ENCODE measurements at regions of chr1 and their contacts with region 1.

Region 1: DNA sequence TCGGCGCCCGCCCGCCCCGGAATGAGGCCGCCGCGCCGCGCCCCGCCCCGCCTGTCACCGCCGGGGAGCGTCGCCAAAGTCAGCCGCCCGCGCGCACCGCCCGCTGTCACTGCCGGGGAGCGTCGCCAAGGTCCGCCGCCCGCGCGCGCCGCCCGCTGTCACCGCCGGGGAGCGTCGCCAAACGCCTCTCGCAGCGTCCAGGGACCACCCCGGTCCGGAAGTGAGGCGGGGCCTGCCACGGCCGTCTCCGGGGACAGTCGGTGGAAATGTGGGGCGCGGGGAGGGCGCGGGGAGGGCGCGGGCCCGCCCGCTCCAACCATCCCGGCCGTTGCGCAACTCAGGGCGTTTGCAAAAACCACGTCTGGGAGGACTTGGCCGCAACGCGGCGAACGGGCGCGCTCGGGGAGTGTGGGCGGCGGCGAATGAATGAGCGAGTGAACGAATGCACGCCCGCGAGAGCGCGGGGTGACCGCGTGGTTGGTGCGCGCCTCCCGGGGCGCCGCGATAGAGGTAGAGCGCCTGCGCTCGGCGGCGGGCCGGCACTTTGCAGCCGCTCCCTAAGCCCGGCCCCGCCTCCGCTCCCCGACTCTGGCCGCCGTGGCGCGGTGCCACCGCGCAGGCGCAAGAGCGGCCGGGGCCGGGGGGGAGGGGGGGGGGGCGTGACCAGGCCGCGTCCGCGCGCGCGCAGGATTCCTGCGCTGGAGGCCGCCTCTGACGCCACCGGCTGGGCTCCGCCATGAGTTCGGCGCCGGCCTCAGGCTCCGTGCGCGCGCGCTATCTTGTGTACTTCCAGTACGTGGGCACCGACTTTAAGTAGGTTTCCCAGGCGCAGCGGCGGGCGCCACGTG is at the starts of genes ACAP3 and PUSL1:
- DNase-seq: peak; percentile 88 to 94 (median 91)
- ATAC-seq: peak; percentile 87
- H3K4me3 ChIP-seq: peak within 1 kb of the TSS; percentile 83
- H3K4me3 Mint-ChIP-seq: peak within 1 kb of the TSS; percentile 82 to 94 (median 88)
- H3K27ac ChIP-seq: peak within 1 kb of the TSS; percentile 90
- H3K27ac Mint-ChIP-seq: peak within 1 kb of the TSS; percentile 47 to 94 (median 89)
- H3K4me1 ChIP-seq: peaks cover 31 to 34% of the 10 kb centered on the region in 2 donors
- H3K4me1 Mint-ChIP-seq: peaks cover 11 to 24% (median 17%) of the 10 kb centered on the region in 7 donors
- H3K27me3 ChIP-seq: no peaks in the 10 kb centered on the region
- H3K27me3 Mint-ChIP-seq: no peaks in the 10 kb centered on the region
- total RNA-seq, gene ACAP3: 51.5 to 70.8 (median 58.2) TPM
- total RNA-seq, gene PUSL1: 17.7 to 25.4 (median 19.4) TPM

Region 2: GRCh38 chr1:958823-959729 is 349.1 kb before region 1 on chr1 and contains the start of gene NOC2L:
- CTCF ChIA-PET with region 1: no interaction called
- POLR2A ChIA-PET with region 1: no interaction called
- intact Hi-C with region 1: loop called in 1 of 2 experiments (anchors 1 kb)
- DNase-seq: peak; percentile 84 to 97 (median 92)
- ATAC-seq: peak; percentile 96
- H3K4me3 ChIP-seq: peak within 1 kb of the TSS; percentile 87
- H3K4me3 Mint-ChIP-seq: peak within 1 kb of the TSS; percentile 83 to 95 (median 90)
- H3K27ac ChIP-seq: peak within 1 kb of the TSS; percentile 89
- H3K27ac Mint-ChIP-seq: peak within 1 kb of the TSS; percentile 48 to 85 (median 77)
- H3K4me1 ChIP-seq: peaks cover 8 to 12% of the 10 kb centered on the region in 2 donors
- H3K4me1 Mint-ChIP-seq: peaks cover 12 to 28% (median 21%) of the 10 kb centered on the region in 7 donors
- H3K27me3 ChIP-seq: no peaks in the 10 kb centered on the region
- H3K27me3 Mint-ChIP-seq: peaks cover 0 to 2% (median 0%) of the 10 kb centered on the region in 5 donors
- total RNA-seq, gene NOC2L: 46.6 to 88.3 (median 67.9) TPM

Region 3: DNA sequence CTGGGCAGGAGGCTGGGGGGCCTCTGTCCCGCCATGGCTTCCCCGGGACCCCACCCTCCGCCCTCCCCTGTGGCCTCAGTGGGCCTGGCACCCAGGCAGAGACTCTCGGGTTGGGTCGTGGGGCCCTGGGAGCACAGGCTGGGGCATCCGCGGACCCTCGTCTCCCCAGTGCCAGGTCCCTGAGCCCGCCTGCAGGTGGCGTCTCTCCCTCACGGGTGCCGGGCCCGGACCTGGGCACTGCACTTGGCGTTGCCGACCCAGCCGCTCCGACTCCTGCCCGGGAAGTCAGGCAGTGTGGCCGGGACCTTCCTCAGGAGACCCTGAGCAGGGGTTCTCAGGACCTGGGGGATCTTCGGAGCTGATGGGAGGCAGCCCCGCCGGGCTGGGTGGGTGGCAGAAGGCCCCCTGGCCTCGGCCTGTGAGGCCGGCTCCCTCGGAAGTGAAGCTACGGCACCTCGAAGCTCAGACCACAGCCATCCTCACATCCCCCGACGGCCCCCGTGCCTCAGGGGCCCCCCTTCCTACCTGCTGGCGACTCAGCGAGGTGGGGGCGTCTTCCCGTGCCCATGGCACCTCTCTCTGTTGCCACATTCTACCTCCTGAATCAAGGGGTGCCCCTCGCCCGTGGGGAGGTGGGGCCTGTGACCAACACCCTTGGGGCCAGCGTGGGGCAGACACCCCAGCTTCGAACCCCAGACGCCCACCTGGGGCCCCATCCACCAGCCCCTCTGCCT is 185.9 kb before region 1 on chr1:
- CTCF ChIA-PET with region 1: interaction called, 4 read pairs
- POLR2A ChIA-PET with region 1: no interaction called
- intact Hi-C with region 1: loop called (anchors 1 kb)
- DNase-seq: peak; percentile 60 to 90 (median 80)
- ATAC-seq: peak; percentile 96
- H3K4me3 ChIP-seq: peak overlapping the region; percentile 45
- H3K4me3 Mint-ChIP-seq: peak overlapping the region in 4 of 10 donors; percentile 20 to 49 (median 32)
- H3K27ac ChIP-seq: peak overlapping the region; percentile 47
- H3K27ac Mint-ChIP-seq: peak overlapping the region in 1 of 9 donors; percentile 52
- H3K4me1 ChIP-seq: peaks cover 5 to 10% of the 10 kb centered on the region in 2 donors
- H3K4me1 Mint-ChIP-seq: peaks cover 0 to 15% (median 3%) of the 10 kb centered on the region in 7 donors
- H3K27me3 ChIP-seq: no peaks in the 10 kb centered on the region
- H3K27me3 Mint-ChIP-seq: peaks cover 0 to 15% (median 0%) of the 10 kb centered on the region in 5 donors

Region 4: DNA sequence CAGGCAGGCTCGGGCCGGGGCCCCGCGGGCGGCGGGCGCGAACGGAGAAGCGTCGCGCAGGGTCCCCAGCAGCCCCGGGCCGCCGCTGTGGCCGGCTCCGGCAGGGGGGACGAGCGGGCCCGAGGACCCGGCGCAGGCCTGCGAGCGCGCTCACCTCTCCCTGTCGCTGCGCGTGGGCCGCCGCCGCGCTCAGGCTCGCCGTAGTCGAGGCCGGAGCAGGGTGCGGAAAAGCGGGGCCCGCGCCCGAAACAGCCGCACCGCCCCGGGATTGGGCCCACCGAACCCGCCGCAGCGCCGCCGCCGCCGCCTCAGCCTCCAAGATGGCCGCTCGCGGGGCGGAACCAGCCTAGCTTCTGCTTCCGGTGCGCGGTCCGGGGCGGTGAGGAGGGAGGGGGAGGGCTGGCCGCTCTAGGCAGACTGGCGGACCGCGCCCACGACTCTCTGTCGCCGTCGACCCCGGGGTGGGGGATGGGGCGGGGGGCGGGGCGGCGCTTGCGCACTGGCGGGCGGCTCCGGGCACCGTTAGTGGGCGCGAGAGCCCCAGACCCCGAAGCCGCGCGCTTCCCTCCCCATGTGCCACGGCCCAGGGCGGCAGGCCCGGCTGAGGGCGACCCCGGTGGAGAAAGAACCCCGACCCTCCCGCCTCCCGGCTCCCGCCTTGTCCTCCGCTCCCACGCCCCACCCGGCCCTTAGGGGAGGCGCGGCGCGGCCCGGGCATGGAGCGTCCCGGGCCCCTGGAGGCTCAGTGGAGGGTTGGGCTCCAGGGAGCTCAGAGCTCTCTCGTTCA is 34.4 kb before region 1 on chr1 and contains the start of gene UBE2J2:
- CTCF ChIA-PET with region 1: no interaction called
- POLR2A ChIA-PET with region 1: no interaction called
- intact Hi-C with region 1: loop called (anchors 1 kb)
- DNase-seq: peak; percentile 83 to 92 (median 90)
- ATAC-seq: peak; percentile 99
- H3K4me3 ChIP-seq: peak within 1 kb of the TSS; percentile 77
- H3K4me3 Mint-ChIP-seq: peak within 1 kb of the TSS; percentile 79 to 92 (median 88)
- H3K27ac ChIP-seq: peak within 1 kb of the TSS; percentile 90
- H3K27ac Mint-ChIP-seq: peak within 1 kb of the TSS; percentile 36 to 94 (median 83)
- H3K4me1 ChIP-seq: peaks cover 28 to 39% of the 10 kb centered on the region in 2 donors
- H3K4me1 Mint-ChIP-seq: peaks cover 21 to 45% (median 35%) of the 10 kb centered on the region in 7 donors
- H3K27me3 ChIP-seq: no peaks in the 10 kb centered on the region
- H3K27me3 Mint-ChIP-seq: no peaks in the 10 kb centered on the region
- total RNA-seq, gene UBE2J2: 62.3 to 89.3 (median 75.1) TPM

Region 5: GRCh38 chr1:1283821-1284220 is 24.3 kb before region 1 on chr1:
- CTCF ChIA-PET with region 1: no interaction called
- POLR2A ChIA-PET with region 1: no interaction called
- intact Hi-C with region 1: no loop called
- DNase-seq: no peak
- ATAC-seq: no peak
- H3K4me3 ChIP-seq: no peak overlapping the region
- H3K4me3 Mint-ChIP-seq: no peak overlapping the region
- H3K27ac ChIP-seq: no peak overlapping the region
- H3K27ac Mint-ChIP-seq: no peak overlapping the region
- H3K4me1 ChIP-seq: no peaks in the 10 kb centered on the region
- H3K4me1 Mint-ChIP-seq: peaks cover 0 to 1% (median 0%) of the 10 kb centered on the region in 7 donors
- H3K27me3 ChIP-seq: no peaks in the 10 kb centered on the region
- H3K27me3 Mint-ChIP-seq: no peaks in the 10 kb centered on the region

Region 6: GRCh38 chr1:1374929-1375662 is 67.0 kb after region 1 on chr1 and contains the start of gene AURKAIP1:
- CTCF ChIA-PET with region 1: interaction called, 4 read pairs
- POLR2A ChIA-PET with region 1: interaction called, 6 read pairs
- intact Hi-C with region 1: loop called (anchors 1 kb)
- DNase-seq: peak; percentile 80 to 98 (median 96)
- ATAC-seq: peak; percentile 84
- H3K4me3 ChIP-seq: peak within 1 kb of the TSS; percentile 74
- H3K4me3 Mint-ChIP-seq: peak within 1 kb of the TSS; percentile 82 to 96 (median 94)
- H3K27ac ChIP-seq: peak within 1 kb of the TSS; percentile 88
- H3K27ac Mint-ChIP-seq: peak within 1 kb of the TSS; percentile 91 to 98 (median 97)
- H3K4me1 ChIP-seq: peaks cover 18 to 35% of the 10 kb centered on the region in 2 donors
- H3K4me1 Mint-ChIP-seq: peaks cover 0 to 37% (median 21%) of the 10 kb centered on the region in 7 donors
- H3K27me3 ChIP-seq: no peaks in the 10 kb centered on the region
- H3K27me3 Mint-ChIP-seq: peaks cover 0 to 2% (median 0%) of the 10 kb centered on the region in 5 donors
- total RNA-seq, gene AURKAIP1: 53.8 to 107 (median 64.5) TPM

Region 7: DNA sequence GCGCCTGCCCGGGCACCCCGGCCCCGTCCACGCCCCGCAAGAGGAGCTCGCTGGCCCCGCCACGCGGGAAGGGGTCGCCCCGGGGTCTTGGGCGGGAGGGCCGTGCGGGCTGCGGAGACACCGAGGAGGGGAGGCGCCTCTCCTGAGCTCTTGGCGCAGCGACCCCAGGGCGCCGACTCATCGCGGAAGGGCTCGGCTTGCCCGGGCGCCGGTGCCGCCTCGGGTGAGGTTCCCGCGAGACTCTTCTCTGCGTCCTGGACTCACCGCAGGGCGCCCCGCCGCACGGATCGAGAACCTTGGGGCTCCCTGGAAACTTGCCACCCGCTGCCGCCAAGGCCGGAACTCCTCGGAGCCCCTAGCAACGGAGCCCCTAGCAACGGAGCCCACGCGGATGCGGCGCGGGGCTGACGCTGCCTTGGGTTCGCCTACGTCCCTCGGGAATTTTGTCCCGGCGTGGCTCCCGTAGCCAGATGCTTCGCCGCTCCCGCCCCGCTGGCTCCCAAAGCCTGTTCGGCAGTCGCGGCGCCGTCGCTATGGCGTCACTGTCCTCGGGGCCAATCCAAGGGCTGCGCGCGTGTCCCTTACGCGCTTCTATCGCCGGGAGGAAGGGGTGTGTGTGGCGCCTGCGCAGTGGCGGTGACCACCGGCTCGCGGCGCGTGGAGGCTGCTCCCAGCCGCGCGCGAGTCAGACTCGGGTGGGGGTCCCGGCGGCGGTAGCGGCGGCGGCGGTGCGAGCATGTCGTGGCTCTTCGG is 203.6 kb after region 1 on chr1 and contains the start of gene ATAD3A:
- CTCF ChIA-PET with region 1: no interaction called
- POLR2A ChIA-PET with region 1: no interaction called
- intact Hi-C with region 1: loop called in 1 of 2 experiments (anchors 5 kb)
- DNase-seq: peak; percentile 84 to 96 (median 94)
- ATAC-seq: peak; percentile 96
- H3K4me3 ChIP-seq: peak within 1 kb of the TSS; percentile 98
- H3K4me3 Mint-ChIP-seq: peak within 1 kb of the TSS; percentile 82 to 94 (median 90)
- H3K27ac ChIP-seq: peak within 1 kb of the TSS; percentile 85
- H3K27ac Mint-ChIP-seq: peak within 1 kb of the TSS; percentile 81 to 96 (median 92)
- H3K4me1 ChIP-seq: peaks cover 4 to 5% of the 10 kb centered on the region in 2 donors
- H3K4me1 Mint-ChIP-seq: peaks cover 6 to 21% (median 14%) of the 10 kb centered on the region in 7 donors
- H3K27me3 ChIP-seq: no peaks in the 10 kb centered on the region
- H3K27me3 Mint-ChIP-seq: no peaks in the 10 kb centered on the region
- total RNA-seq, gene ATAD3A: 21.0 to 41.3 (median 22.9) TPM

Region 8: DNA sequence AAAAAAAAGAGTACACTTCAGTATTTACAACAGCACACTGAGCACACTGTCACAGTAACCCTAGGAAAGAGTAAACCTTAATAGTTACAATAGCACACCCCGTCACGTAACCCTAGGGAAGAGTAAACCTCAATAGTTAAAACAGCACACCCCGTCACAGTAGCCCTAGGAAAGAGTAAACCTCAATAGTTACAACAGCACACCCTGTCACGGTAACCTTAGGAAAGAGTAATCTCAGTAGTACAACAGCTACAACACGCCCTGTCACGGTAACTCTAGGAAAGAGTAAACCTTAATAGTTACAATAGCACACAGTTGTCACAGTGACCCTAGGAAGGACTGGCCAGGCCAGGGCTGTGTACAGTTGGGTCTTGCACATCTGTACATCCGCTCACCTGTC is 413.1 kb after region 1 on chr1:
- CTCF ChIA-PET with region 1: no interaction called
- POLR2A ChIA-PET with region 1: no interaction called
- intact Hi-C with region 1: no loop called
- DNase-seq: no peak
- ATAC-seq: no peak
- H3K4me3 ChIP-seq: no peak overlapping the region
- H3K4me3 Mint-ChIP-seq: peak overlapping the region in 2 of 10 donors; percentile 4 to 43
- H3K27ac ChIP-seq: no peak overlapping the region
- H3K27ac Mint-ChIP-seq: peak overlapping the region in 5 of 9 donors; percentile 28 to 67 (median 51)
- H3K4me1 ChIP-seq: no peaks in the 10 kb centered on the region
- H3K4me1 Mint-ChIP-seq: peaks cover under 1 to 18% (median 12%) of the 10 kb centered on the region in 7 donors
- H3K27me3 ChIP-seq: no peaks in the 10 kb centered on the region
- H3K27me3 Mint-ChIP-seq: peaks cover 0 to 4% (median 0%) of the 10 kb centered on the region in 5 donors

Measured in naive thymus-derived CD4-positive, alpha-beta T cell (primary cell).